ENCODE measurements at regions of chr20 and their contacts with region 1.

Region 1: DNA sequence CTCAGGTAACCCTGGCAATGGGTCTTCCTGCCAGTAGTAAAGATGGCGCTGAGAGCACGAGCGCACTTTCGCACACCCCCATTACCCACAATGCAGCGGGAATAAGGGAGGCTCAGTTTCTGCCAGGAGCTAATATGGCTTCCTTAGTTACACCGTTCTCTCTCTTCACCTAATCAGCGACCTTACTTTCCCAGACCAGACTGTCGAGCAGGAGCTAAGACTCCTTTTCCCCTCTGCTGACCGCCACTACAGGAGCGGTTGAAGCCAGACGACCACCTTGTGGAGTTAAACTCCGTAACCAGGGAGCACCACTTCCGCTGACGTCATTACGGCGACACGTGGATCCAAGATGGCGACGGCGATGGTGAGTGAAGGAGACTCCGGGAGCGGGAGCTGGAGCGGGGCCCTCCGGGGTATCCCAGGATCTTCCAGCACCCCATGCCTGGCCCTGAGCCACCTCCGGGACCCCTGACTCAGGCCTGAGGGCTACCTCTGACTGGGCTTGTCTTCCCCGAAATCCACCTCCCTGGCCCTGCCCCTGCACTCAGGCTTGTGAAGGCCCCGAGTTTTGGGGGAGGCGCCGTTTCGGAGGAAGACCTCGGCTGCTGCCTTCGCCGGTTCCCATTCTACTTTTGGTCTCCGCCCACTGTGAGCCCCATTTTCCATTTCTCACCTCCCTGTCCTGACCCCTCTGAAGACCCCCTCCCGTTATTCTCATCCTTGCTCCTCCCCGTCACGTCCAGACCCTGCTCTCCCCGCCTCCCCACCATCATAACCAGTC is at the start of gene TM9SF4:
- DNase-seq: peak; percentile 48
- H3K4me3 ChIP-seq: peak within 1 kb of the TSS; percentile 60 to 97 (median 93)
- H3K27ac ChIP-seq: peak within 1 kb of the TSS; percentile 93 to 100 (median 100)
- H3K4me1 ChIP-seq: peaks cover 27 to 50% (median 33%) of the 10 kb centered on the region in 3 donors
- H3K27me3 ChIP-seq: no peaks in the 10 kb centered on the region
- CTCF ChIP-seq: peak in 1 of 6 experiments; percentile 28
- POLR2A ChIP-seq: peak in 2 of 4 donors; percentile 31 to 73
- total RNA-seq, gene TM9SF4: 28.5 to 36.3 (median 32.1) TPM

Region 2: GRCh38 chr20:32183947-32184635 is 74.5 kb after region 1 on chr20:
- intact Hi-C with region 1: no loop called
- DNase-seq: no peak
- H3K4me3 ChIP-seq: no peak overlapping the region
- H3K27ac ChIP-seq: no peak overlapping the region
- H3K4me1 ChIP-seq: peaks cover 3 to 18% (median 4%) of the 10 kb centered on the region in 3 donors
- H3K27me3 ChIP-seq: no peaks in the 10 kb centered on the region
- CTCF ChIP-seq: no peak
- POLR2A ChIP-seq: no peak

Region 3: DNA sequence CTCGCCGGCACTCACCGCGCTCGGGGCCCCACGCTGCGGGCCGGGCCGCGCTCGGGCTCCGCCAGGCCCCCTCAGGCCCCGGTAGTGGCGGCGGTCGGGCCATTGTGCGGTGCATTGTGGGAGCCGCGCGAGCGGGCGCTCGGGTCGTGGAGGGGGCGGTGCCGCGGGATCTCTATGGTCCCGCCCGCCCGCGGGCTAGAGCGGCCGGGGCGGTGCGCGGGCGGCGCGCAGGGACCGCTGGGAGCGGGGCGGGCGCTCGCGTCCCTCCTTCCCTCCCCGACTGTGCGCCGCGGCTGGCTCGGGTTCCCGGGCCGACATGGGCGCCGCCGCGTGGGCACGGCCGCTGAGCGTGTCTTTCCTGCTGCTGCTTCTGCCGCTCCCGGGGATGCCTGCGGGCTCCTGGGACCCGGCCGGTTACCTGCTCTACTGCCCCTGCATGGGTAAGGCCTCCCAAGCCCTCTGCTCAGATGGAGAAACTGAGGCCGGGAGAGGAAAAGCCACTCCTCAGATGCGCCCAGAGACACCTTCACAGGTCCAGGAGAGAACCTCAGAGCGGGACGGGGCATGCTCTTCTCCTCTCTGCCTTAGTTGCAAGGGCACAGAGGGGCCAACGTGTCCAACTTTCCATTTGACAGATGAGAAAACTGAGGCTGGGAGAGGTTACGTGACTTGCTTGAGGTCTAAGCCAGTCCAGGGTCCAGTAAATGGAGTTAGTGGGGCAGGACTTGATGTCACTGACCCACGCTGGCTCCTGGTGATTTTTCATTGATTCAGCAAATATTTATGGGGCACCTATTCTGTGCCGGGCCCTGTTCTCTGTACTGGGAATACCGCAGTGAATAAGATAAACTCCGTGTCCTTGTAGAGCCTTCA is 98.3 kb after region 1 on chr20 and contains the starts of genes PLAGL2 and POFUT1:
- intact Hi-C with region 1: loop called (anchors 10 kb)
- DNase-seq: peak; percentile 23
- H3K4me3 ChIP-seq: peak within 1 kb of the TSS; percentile 89 to 100 (median 92)
- H3K27ac ChIP-seq: peak within 1 kb of the TSS; percentile 93 to 98 (median 98)
- H3K4me1 ChIP-seq: peaks cover 29 to 71% (median 49%) of the 10 kb centered on the region in 3 donors
- H3K27me3 ChIP-seq: no peaks in the 10 kb centered on the region
- CTCF ChIP-seq: peak in 5 of 6 experiments; percentile 9 to 30 (median 23)
- POLR2A ChIP-seq: peak in 3 of 4 donors; percentile 32 to 78 (median 62)
- total RNA-seq, gene PLAGL2: 6.2 to 14.0 (median 11.2) TPM
- total RNA-seq, gene POFUT1: 15.7 to 29.6 (median 18.1) TPM

Region 4: DNA sequence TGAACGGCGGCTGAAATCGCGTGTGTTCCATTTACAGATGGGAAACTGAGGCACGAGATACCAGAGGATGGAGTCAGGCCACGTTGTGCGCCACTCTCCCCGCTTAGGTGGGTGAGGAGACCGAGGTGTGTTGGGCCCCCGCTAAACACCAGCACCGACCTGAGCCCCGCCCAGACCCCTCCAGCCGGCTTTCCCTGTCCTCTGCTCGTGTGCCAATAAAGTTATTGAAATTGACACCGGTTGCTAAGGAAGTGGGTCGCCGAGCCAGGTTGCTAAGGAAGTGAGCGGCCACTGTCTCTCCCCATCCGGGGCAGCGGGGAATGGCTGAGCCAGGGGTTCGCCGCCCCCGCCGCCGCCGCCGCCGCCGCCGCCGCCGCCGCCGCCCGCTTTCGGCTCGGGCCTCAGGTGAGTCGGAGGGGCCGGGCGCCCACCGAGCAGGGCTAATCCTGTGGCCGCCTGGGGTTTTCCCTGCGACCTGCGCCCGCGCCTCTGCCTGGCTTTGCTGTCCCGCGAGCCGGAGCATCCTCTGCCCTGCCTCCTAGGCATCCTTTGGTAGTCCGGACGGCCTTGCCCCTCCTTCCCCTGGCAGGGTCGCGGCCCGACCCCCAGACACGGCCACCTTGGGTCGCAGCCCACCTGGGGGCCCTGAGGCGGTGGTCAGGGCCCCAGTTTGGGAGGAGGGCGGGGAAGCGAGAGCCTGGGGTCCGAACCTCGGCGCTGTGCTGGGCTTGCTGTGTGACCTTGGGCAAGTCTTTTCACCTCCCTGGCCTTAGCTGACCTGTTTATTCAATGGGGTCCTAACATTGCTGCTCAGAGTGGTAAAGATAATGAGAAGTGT is 168.0 kb after region 1 on chr20 and contains the start of gene KIF3B:
- intact Hi-C with region 1: no loop called
- DNase-seq: peak; percentile 45
- H3K4me3 ChIP-seq: peak within 1 kb of the TSS; percentile 68 to 95 (median 90)
- H3K27ac ChIP-seq: peak within 1 kb of the TSS; percentile 67 to 87 (median 80)
- H3K4me1 ChIP-seq: peaks cover 5 to 37% (median 16%) of the 10 kb centered on the region in 3 donors
- H3K27me3 ChIP-seq: no peaks in the 10 kb centered on the region
- CTCF ChIP-seq: peak in 1 of 6 experiments; percentile 6
- POLR2A ChIP-seq: peak in 2 of 4 donors; percentile 25 to 40
- total RNA-seq, gene KIF3B: 8.5 to 14.1 (median 11.4) TPM

Region 5: GRCh38 chr20:32535953-32536823 is 426.6 kb after region 1 on chr20:
- intact Hi-C with region 1: no loop called
- DNase-seq: peak; percentile 26
- H3K4me3 ChIP-seq: peak overlapping the region; percentile 30 to 68 (median 50)
- H3K27ac ChIP-seq: peak overlapping the region; percentile 31 to 74 (median 62)
- H3K4me1 ChIP-seq: peaks cover 23 to 57% (median 25%) of the 10 kb centered on the region in 3 donors
- H3K27me3 ChIP-seq: peaks cover 0 to 35% (median 0%) of the 10 kb centered on the region in 4 donors
- CTCF ChIP-seq: no peak
- POLR2A ChIP-seq: peak in 1 of 4 donors; percentile 38

Measured in esophagus squamous epithelium (tissue), 5 donors.